ENCODE measurements at regions of chr3 and their contacts with region 1.

Region 1: DNA sequence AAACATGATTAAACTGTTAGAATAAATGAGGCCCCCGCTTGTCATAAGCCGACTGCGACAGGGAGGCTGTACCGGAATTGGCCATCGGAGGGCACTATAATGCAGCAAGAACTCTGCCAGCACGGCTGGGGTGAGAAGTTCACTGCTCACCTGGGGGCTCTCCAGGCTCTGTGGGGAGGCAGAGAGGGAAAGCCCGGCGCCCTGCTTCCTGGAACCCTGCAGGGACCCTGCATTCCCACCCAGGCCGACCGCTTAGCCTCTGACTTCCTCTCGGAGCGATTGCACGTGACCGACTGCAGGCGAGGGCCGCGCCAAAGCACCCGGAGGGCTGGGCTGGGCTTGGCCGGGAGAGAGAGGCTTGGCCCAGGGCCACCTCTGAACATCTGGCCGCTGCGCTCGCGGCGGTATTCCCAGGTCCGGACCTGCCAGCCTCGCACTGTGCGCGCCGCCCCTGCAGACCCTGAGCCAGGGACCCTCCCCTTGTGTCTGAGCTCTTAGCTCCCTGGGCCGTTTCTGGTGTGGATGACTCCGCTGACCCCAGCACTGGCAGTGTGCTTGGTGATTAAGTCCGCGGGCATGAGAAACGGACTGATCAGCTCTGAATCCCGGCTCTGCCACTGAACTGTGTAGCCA is 26.2 kb downstream of the DRD3 start:
- DNase-seq: peak; percentile 88

Region 2: GRCh38 chr3:113812854-113813253 is 339.8 kb before region 1 on chr3:
- intact Hi-C with region 1: no loop called
- DNase-seq: no peak

Region 3: GRCh38 chr3:114056130-114057010 is 96.3 kb before region 1 on chr3 and contains the starts of genes CCDC191 and QTRT2:
- intact Hi-C with region 1: loop called (anchors 10 kb)
- DNase-seq: peak; percentile 100
- total RNA-seq, gene CCDC191: 1.2 TPM
- total RNA-seq, gene QTRT2: 6.5 TPM

Region 4: DNA sequence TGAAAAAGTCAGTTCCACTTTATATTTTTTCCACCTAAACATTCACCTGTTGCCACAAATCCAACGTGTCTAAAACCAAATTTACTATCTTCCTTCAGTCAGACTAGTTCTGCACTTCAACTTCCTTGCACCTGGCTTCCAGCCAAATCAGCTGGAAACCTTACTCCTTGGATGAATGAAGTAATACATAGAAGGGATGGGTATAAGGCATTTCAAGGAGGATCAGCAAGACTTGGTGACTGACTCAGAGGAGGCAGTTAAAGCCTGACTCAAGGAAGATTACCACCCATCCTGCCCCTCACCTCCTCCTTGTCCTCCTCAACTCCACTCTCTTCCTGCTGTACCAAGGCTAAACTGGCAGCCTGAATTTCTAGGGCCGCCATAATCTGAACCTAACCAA is 59.0 kb before region 1 on chr3:
- intact Hi-C with region 1: loop called (anchors 5 kb)
- DNase-seq: no peak

Region 5: GRCh38 chr3:114122027-114122709 is 30.5 kb before region 1 on chr3:
- intact Hi-C with region 1: loop called (anchors 2 kb)
- DNase-seq: no peak

Region 6: DNA sequence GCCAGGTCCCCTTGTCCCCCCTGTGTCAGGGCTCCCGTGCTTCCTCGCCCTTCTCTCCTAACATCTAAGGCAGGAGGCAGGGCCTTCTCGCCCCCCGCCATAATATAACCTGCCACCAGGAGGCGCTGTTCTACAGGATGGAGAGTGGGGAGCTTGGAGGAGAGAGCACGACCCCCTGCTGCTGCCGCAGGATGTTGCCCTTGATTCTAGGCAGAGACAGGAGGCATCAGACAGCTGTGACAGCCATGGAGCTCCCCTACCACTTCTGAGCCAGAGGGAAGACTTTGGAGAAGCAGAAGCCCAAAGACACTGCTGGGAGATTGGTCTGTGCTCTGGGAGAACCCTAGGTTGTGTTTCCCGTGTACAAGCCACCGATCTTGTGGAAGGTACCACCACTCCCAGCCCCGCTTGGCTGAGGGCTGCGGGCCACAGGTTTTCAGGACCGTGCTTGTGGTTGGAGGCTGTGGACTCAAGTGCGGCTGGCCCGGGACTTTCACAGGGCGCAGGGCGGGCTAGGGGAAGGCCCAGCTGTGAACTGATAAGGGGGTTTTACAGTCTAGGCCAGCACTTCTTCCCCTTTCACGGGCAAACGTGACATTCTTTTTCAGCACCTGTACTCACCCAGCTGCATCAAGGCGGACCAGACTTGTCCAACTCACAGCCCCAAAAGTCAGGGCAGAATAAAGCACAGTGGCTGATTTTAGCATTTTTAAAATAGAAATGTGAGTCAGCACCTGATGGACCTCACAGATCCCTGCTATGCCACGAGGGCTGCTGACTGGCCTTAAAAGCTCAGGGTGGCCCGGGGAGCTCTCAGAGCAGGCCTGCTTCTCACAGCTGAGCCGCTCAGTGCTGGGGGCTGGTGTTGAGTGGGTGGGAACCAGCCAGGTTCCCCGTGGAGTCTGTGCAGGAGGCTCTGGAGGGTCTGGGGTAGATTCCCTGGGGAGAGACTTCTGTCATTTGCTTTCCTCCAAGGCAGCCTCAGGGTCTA is 138.6 kb after region 1 on chr3:
- intact Hi-C with region 1: loop called (anchors 10 kb)
- DNase-seq: peak; percentile 80

Region 7: DNA sequence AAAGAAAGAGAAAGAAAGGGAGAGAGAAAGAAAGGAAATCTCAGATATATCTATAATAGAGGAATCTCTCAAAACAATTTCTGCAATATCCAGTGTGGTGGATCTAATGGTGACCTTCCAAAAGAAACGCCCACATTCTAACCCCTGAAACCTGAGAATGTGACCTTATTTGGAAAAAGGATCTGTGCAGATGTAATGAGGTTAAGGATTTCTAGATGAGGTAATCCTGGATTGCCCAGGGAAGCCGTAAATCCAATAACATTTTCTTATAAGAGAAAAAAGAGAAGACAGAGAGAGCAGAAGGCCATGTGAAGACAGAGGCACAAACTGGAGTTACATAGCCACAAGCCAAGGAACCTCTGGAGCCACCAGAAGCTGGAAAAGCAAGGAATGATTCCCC is 686.8 kb after region 1 on chr3:
- intact Hi-C with region 1: loop called (anchors 10 kb)
- DNase-seq: no peak